ENCODE measurements at regions of chr2 and their contacts with region 1.

Region 1: GRCh38 chr2:7026742-7027141 is 109.5 kb downstream of the RNF144A start:
- DNase-seq: no peak
- H3K4me3 ChIP-seq: no peak overlapping the region
- H3K27ac ChIP-seq: no peak overlapping the region
- H3K4me1 ChIP-seq: peaks cover 4% of the 10 kb centered on the region
- H3K27me3 ChIP-seq: no peaks in the 10 kb centered on the region
- CTCF ChIP-seq: no peak
- POLR2A ChIP-seq: no peak

Region 2: GRCh38 chr2:6917071-6917760 is 109.5 kb before region 1 on chr2 and contains the start of gene RNF144A:
- intact Hi-C with region 1: loop called (anchors 10 kb)
- DNase-seq: peak; percentile 64
- H3K4me3 ChIP-seq: peak within 1 kb of the TSS; percentile 57 to 73
- H3K27ac ChIP-seq: peak within 1 kb of the TSS in 1 of 2 donors; percentile 73
- H3K4me1 ChIP-seq: peaks cover 19% of the 10 kb centered on the region
- H3K27me3 ChIP-seq: no peaks in the 10 kb centered on the region
- CTCF ChIP-seq: peak in 2 of 3 experiments; percentile 35 to 68
- POLR2A ChIP-seq: no peak
- total RNA-seq, gene RNF144A: 12.6 to 12.9 TPM

Region 3: GRCh38 chr2:6929196-6929819 is 97.4 kb before region 1 on chr2:
- intact Hi-C with region 1: no loop called
- DNase-seq: no peak
- H3K4me3 ChIP-seq: no peak overlapping the region
- H3K27ac ChIP-seq: no peak overlapping the region
- H3K4me1 ChIP-seq: peaks cover 17% of the 10 kb centered on the region
- H3K27me3 ChIP-seq: no peaks in the 10 kb centered on the region
- CTCF ChIP-seq: no peak
- POLR2A ChIP-seq: no peak

Measured in testis (tissue), 5 donors.